ENCODE measurements at regions of chr7 and their contacts with region 1.

Region 1: DNA sequence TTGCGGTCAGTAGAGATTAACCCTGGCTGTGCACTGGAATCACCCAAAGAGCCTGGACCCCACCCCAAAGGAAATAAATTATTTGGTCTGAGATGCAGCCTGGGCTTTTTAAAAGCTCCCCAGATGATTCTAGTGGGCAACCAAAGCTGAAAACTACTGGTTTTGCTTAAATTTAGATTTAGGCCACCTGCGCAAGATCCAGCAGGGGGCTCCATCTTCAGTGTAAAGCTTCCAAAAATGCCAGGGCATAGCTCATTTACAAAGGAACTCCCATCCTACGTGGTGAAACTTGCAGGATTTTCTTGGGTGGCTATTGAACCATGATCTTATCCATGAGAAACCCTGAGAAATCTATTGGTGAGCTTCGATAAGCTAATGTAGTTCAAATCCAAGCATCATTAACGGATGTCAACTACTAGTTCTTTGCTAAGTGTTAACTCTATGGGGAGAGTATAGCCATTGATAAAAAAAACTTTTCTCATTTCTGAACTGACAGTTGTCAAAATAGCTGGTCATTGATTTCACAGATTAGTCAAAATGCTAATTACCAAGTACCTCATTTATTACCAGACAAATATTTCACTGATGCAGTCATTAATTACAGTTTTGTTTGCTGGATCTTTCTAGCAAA is 315.3 kb downstream of the LHFPL3 start:
- DNase-seq: peak; percentile 49
- H3K4me3 ChIP-seq: no peak overlapping the region
- H3K27ac ChIP-seq: no peak overlapping the region
- H3K4me1 ChIP-seq: no peaks in the 10 kb centered on the region
- H3K27me3 ChIP-seq: peaks cover 58% of the 10 kb centered on the region
- CTCF ChIP-seq: peak; percentile 73

Region 2: DNA sequence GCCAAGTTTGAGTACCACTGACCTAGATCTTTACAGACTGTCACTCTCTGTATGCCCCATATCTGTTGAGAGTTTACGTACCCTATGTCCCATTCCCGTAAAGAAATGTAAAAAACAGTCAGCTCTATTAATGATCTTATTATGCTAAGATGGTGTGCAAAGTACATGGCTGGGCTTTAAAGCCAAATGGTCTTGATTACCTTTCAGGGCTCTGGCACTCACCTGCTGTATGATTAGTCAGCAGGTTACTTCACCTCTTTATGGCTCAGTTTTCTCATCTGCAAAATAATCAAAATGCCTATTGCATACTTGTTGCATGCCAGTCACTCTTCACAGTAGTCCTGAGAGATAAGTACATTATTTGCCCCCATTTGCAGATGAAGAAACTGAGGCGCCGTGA is 261.1 kb before region 1 on chr7:
- CTCF ChIA-PET with region 1: no interaction called
- POLR2A ChIA-PET with region 1: no interaction called
- intact Hi-C with region 1: no loop called
- DNase-seq: no peak
- H3K4me3 ChIP-seq: no peak overlapping the region
- H3K27ac ChIP-seq: no peak overlapping the region
- H3K4me1 ChIP-seq: no peaks in the 10 kb centered on the region
- H3K27me3 ChIP-seq: peaks cover 44% of the 10 kb centered on the region
- CTCF ChIP-seq: no peak

Region 3: DNA sequence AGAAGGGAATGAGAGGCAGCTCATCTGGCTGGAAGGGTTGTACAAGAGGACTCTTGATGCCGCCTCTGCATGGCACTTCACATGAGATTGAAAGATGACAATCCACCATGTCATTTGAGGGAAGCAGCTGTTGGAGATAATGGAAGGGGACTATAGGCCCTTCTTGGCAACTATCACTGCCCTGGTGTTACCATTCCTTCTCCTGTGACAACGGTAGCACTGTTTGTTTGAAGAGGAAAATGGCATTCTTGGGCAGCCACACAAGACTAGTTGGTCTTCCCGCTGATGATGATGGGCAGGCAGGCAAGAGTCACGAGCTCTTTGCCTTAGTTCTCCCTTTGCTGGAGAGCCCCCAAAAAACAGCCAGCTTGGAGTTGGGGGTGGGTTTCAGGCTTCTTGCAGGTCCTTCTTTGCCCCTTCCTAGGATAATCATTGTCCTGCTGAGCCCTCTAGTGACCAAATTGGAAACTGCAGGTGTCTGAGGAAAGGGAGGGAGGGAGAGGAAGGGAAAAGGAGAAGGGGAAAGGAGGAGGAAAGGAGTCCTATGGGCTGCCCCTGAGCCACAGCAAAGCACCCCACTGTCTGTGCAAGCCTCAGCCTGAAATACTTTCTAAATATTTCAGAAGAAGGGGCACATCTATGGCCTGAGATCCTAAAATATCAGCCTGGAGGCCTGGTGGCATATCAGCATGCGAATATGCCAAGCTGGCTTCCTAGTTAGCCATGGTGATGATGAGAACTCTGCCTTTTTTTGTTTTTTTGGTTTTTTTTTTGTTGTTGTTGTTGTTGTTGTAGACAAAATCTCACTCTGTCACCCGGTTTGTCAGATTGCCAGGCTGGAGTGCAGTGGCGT is 204.7 kb after region 1 on chr7:
- CTCF ChIA-PET with region 1: interaction called, 5 read pairs
- POLR2A ChIA-PET with region 1: no interaction called
- intact Hi-C with region 1: loop called (anchors 1 kb)
- DNase-seq: peak; percentile 73
- H3K4me3 ChIP-seq: no peak overlapping the region
- H3K27ac ChIP-seq: no peak overlapping the region
- H3K4me1 ChIP-seq: no peaks in the 10 kb centered on the region
- H3K27me3 ChIP-seq: peaks cover 41% of the 10 kb centered on the region
- CTCF ChIP-seq: peak; percentile 94

Measured in A673 (cell line).